Activated naive CD4-positive, alpha-beta T cell treated with anti-CD3 and anti-CD28 coated beads for 36 hours (primary cell): ENCODE measurements at regions of chr17 and their contacts with region 1.

Region 1: GRCh38 chr17:35119368-35120165 is at the start of gene RAD51D:
- DNase-seq: peak; percentile 78
- H3K4me3 Mint-ChIP-seq: peak within 1 kb of the TSS; percentile 90
- H3K27ac Mint-ChIP-seq: peak within 1 kb of the TSS; percentile 86
- H3K4me1 Mint-ChIP-seq: peaks cover 42% of the 10 kb centered on the region
- H3K27me3 Mint-ChIP-seq: no peaks in the 10 kb centered on the region
- total RNA-seq, gene RAD51D: 31.5 to 33.0 TPM

Region 2: DNA sequence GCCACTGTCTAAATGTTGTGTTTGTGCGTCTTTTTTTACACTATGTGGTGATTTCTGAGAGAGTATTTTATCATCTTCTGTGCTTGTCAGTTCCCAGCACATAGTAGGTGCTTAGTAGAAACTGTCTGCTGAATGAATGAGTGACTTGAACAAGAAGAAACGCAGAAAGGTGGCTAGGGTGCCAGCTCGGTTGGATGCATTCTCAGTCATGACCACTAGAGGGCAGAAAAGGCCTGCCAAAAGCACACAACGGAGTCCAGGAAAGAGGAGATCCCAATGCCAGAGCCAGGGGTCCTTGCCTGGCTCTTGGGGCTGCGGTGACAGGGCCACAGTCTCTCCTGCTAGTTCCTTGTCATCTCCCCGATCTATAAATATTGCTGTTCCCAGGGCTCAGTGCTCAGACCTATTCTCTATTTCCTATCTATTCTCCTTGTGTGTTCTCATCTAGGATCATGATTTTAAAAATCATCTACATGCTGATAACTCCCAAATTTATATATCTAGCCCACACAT is 699.3 kb before region 1 on chr17:
- CTCF ChIA-PET with region 1: interaction called, 4 read pairs
- intact Hi-C with region 1: loop called (anchors 1 kb)
- DNase-seq: peak; percentile 77
- H3K4me3 Mint-ChIP-seq: no peak overlapping the region
- H3K27ac Mint-ChIP-seq: no peak overlapping the region
- H3K4me1 Mint-ChIP-seq: no peaks in the 10 kb centered on the region
- H3K27me3 Mint-ChIP-seq: peaks cover 32% of the 10 kb centered on the region

Region 3: GRCh38 chr17:34579017-34579946 is 540.3 kb before region 1 on chr17 and contains the start of gene TMEM132E:
- CTCF ChIA-PET with region 1: no interaction called
- intact Hi-C with region 1: loop called (anchors 2 kb)
- DNase-seq: no peak
- H3K4me3 Mint-ChIP-seq: peak within 1 kb of the TSS; percentile 69
- H3K27ac Mint-ChIP-seq: no peak within 1 kb of the TSS
- H3K4me1 Mint-ChIP-seq: peaks cover 11% of the 10 kb centered on the region
- H3K27me3 Mint-ChIP-seq: peaks cover 74% of the 10 kb centered on the region
- total RNA-seq, gene TMEM132E: not detected

Region 4: DNA sequence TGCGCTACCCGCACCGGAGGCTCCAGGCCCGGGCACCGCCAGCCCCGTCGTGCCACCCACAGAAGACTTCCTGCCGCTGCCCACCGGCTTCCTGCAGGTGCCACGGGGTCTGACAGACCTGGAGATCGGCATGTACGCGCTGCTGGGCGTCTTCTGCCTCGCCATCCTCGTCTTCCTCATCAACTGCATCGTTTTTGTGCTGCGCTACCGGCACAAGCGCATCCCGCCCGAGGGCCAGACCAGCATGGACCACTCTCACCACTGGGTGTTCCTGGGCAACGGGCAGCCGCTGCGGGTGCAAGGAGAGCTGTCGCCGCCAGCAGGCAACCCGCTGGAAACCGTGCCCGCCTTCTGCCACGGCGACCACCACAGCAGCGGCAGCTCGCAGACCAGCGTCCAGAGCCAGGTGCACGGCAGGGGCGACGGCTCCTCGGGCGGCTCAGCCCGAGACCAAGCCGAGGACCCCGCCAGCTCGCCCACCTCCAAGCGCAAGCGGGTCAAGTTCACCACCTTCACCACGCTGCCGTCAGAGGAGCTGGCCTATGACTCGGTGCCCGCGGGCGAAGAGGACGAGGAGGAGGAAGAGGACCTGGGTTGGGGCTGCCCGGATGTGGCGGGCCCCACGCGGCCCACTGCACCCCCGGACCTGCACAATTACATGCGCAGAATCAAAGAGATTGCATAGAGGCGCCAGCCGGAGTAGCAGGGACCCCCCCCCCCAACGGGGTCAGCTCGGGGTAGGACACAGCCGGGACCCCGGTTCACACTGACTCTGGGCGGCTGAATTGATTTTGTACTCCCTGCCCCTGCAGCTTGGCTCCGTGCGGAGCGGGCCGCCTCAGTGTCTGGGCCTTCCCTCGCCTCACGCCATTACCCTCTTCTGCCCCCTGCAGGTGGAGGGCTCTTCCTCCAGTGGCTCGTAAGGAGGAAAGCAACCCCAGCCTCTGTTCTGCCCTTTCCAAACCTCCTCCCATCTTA is 481.7 kb before region 1 on chr17:
- CTCF ChIA-PET with region 1: interaction called, 4 read pairs
- intact Hi-C with region 1: loop called (anchors 1 kb)
- DNase-seq: peak; percentile 89
- H3K4me3 Mint-ChIP-seq: peak overlapping the region; percentile 63
- H3K27ac Mint-ChIP-seq: no peak overlapping the region
- H3K4me1 Mint-ChIP-seq: peaks cover 2% of the 10 kb centered on the region
- H3K27me3 Mint-ChIP-seq: peaks cover 3% of the 10 kb centered on the region

Region 5: DNA sequence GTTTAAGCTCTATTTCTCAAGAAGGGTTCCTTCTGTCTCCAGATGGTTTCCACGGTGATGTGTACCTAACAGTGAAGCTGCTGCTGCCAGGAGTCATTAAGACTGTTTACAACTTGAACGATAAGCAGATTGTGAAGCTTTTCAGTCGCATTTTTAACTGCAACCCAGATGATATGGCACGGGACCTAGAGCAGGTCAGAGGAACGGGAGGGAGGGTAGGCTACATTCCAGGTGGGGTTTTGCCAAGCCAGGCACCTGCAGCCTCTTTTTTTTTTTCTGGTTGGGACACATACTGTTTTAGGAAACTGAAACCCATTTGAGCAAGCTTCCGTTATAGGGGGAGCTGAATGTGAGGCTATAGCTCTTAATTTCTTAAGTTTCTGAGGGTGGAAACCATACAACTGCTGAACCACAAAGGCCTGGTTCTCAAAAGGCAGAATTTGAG is 128.6 kb before region 1 on chr17:
- CTCF ChIA-PET with region 1: interaction called, 62 read pairs
- intact Hi-C with region 1: no loop called
- DNase-seq: no peak
- H3K4me3 Mint-ChIP-seq: no peak overlapping the region
- H3K27ac Mint-ChIP-seq: no peak overlapping the region
- H3K4me1 Mint-ChIP-seq: no peaks in the 10 kb centered on the region
- H3K27me3 Mint-ChIP-seq: no peaks in the 10 kb centered on the region

Region 6: DNA sequence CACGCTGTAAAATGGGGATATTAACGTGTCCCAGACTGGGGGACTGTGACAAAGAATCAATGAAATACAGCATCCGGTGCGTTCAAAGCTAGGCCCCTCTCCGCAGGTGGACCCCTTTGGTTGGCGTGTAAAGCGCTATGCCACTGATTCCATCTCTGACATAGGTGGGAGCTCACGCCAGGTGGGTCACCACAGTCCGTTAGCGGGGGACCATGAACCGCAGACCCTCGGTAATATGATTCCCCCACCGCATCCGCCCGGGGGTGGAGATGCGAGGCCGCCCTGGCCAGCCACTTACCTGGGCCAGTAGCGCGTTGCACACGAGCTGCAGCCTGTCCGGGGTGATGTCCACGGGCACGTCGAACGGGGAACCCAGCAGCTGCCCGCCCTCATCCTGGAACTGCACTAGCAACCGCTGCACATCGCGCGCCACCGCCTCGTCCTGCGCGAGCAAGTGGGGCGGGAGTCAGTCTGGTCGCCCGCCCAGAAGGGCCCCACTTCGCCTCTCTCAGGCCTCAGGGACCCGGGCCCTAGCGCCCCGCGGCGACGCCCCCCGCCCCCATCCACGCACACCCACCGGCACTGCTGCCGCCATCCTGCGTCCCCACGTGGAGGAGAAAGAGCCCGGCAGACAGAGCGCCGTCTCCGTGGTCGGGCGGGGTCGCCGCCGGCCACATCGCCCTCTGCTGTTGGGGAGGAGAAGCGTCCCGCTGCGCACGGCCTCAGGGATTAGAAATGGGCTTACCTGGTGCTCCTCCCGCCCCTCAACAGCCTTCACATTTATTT is 22.3 kb after region 1 on chr17 and contains the start of gene NLE1:
- CTCF ChIA-PET with region 1: interaction called, 11 read pairs
- intact Hi-C with region 1: no loop called
- DNase-seq: peak; percentile 89
- H3K4me3 Mint-ChIP-seq: peak within 1 kb of the TSS; percentile 77
- H3K27ac Mint-ChIP-seq: peak within 1 kb of the TSS; percentile 82
- H3K4me1 Mint-ChIP-seq: peaks cover 25% of the 10 kb centered on the region
- H3K27me3 Mint-ChIP-seq: no peaks in the 10 kb centered on the region
- total RNA-seq, gene NLE1: 33.0 to 35.2 TPM

Region 7: GRCh38 chr17:35337364-35337763 is 217.8 kb after region 1 on chr17:
- CTCF ChIA-PET with region 1: no interaction called
- intact Hi-C with region 1: no loop called
- DNase-seq: no peak
- H3K4me3 Mint-ChIP-seq: no peak overlapping the region
- H3K27ac Mint-ChIP-seq: no peak overlapping the region
- H3K4me1 Mint-ChIP-seq: peaks cover 8% of the 10 kb centered on the region
- H3K27me3 Mint-ChIP-seq: no peaks in the 10 kb centered on the region

Region 8: GRCh38 chr17:35825206-35825605 is 705.6 kb after region 1 on chr17:
- CTCF ChIA-PET with region 1: no interaction called
- intact Hi-C with region 1: no loop called
- DNase-seq: no peak
- H3K4me3 Mint-ChIP-seq: no peak overlapping the region
- H3K27ac Mint-ChIP-seq: no peak overlapping the region
- H3K4me1 Mint-ChIP-seq: peaks cover 6% of the 10 kb centered on the region
- H3K27me3 Mint-ChIP-seq: no peaks in the 10 kb centered on the region